Common myeloid progenitor, CD34-positive (primary cell): ENCODE measurements at regions of chr12 and their contacts with region 1.

Region 1: DNA sequence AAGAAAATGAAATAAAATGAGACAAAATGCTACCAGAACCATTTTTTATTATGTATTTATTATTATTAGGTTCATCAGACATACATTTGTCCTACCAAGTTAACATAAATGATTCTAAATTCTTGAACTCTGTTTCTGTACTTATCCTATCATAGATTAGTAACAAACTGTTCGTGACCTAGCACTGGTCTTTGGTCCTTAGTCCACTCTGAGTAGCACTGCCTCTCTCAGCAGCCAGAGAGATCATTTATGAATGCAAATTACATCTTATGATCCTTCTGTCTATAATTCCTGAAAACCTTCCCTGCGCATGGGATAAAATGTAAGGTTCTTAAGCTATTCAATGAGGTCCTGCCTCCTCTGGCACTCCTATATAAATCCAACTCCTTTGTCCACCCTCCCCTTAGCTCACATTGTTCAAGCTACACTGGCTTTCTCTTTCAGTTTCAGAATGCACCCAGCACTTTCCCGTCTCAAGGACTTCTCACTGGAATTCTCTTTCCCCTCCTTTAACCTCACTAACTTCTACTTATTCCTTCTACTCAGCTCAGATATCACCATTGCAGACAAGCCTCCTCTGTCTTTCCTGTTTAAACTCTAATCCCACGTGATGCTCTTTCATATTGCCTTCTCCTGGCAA is 17.1 kb downstream of the PDZRN4 start:
- DNase-seq: peak in 2 of 3 donors; percentile 48 to 69
- H3K4me3 ChIP-seq: peak overlapping the region in 5 of 7 experiments; percentile 35 to 76 (median 59)
- H3K27ac ChIP-seq: peak overlapping the region; percentile 9 to 37
- H3K4me1 ChIP-seq: peaks cover 0 to 10% (median under 1%) of the 10 kb centered on the region in 4 experiments
- H3K27me3 ChIP-seq: no peaks in the 10 kb centered on the region

Region 2: GRCh38 chr12:41190338-41190737 is 14.9 kb before region 1 on chr12:
- CTCF ChIA-PET with region 1: interaction called, 10 read pairs
- POLR2A ChIA-PET with region 1: no interaction called
- DNase-seq: peak; percentile 46 to 70 (median 56)
- H3K4me3 ChIP-seq: peak overlapping the region in 5 of 7 experiments; percentile 38 to 67 (median 59)
- H3K27ac ChIP-seq: no peak overlapping the region
- H3K4me1 ChIP-seq: peaks cover 2 to 25% (median 20%) of the 10 kb centered on the region in 4 experiments
- H3K27me3 ChIP-seq: peaks cover 2 to 35% (median 29%) of the 10 kb centered on the region in 5 experiments

Region 3: GRCh38 chr12:41228066-41228820 is 23.1 kb after region 1 on chr12:
- CTCF ChIA-PET with region 1: no interaction called
- POLR2A ChIA-PET with region 1: no interaction called
- DNase-seq: peak; percentile 12 to 60 (median 19)
- H3K4me3 ChIP-seq: peak overlapping the region in 2 of 7 experiments; percentile 6 to 17
- H3K27ac ChIP-seq: no peak overlapping the region
- H3K4me1 ChIP-seq: peaks cover 0 to 17% (median 4%) of the 10 kb centered on the region in 4 experiments
- H3K27me3 ChIP-seq: no peaks in the 10 kb centered on the region

Region 4: GRCh38 chr12:41302979-41303403 is 97.8 kb after region 1 on chr12:
- CTCF ChIA-PET with region 1: no interaction called
- POLR2A ChIA-PET with region 1: no interaction called
- DNase-seq: peak in 2 of 3 donors; percentile 29 to 67
- H3K4me3 ChIP-seq: no peak overlapping the region
- H3K27ac ChIP-seq: no peak overlapping the region
- H3K4me1 ChIP-seq: no peaks in the 10 kb centered on the region
- H3K27me3 ChIP-seq: no peaks in the 10 kb centered on the region

Region 5: DNA sequence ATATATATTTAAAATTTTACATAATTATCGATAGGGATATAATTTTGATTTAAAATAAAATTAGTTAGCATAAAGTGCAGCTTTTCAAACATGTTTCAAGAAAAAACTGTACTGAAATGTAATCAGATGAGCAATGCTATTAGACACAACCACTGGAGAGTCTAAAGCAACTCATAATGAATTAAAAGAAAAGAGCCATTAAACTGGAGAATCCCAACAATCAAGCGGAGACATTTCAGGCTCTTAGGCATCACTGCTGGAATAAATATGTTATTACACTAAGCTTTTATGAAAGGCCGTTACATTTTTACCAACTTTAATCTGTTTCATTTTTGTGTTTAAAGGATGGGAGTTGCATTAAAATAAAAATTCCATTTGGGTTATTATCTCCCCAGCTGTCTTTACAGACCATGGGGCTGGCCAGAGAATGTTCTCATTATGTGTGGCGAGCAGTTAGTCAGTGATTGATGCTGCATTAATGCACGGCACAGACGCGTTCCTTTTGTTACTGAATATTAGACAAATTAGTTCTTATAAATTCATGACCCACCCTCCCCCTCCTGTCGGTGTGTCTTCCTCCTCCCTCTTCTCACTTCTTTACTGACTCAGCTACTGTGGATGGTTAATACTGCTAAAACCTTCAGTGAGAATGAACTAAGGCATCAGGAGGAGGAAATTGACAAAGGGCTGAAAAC is 139.7 kb after region 1 on chr12:
- CTCF ChIA-PET with region 1: no interaction called
- POLR2A ChIA-PET with region 1: no interaction called
- DNase-seq: no peak
- H3K4me3 ChIP-seq: no peak overlapping the region
- H3K27ac ChIP-seq: no peak overlapping the region
- H3K4me1 ChIP-seq: peaks cover 0 to 6% (median 1%) of the 10 kb centered on the region in 4 experiments
- H3K27me3 ChIP-seq: no peaks in the 10 kb centered on the region